CD8-positive, alpha-beta T cell (primary cell): ENCODE measurements at regions of chr10 and their contacts with region 1.

Region 1: DNA sequence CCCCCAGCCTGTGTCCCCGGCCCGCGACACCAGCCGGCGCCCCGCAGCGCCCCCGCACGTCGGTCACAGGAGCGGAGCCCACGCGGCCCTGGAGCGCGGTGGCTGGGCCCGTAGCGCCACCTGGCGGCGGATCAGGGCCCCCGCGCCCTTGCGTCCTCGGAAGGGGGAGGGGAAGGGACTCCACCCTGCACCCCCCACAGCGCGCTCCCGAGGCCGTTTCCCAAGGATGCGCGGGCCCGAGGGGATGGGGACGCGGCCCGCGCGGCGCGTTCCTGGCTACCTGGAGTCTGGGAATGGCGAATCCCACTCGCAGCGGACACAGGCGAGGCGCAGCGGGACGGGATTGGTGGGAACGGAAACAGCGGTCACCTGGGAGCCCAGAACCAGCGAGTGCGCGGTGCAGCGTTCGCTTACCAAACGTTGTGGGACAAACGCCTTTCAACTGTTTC is 23.8 kb upstream of the MKI67 start:
- DNase-seq: peak; percentile 54 to 91 (median 80)
- ATAC-seq: peak; percentile 98
- H3K4me3 ChIP-seq: peak overlapping the region; percentile 66 to 83
- H3K4me3 Mint-ChIP-seq: peak overlapping the region; percentile 73
- H3K27ac ChIP-seq: no peak overlapping the region
- H3K27ac Mint-ChIP-seq: no peak overlapping the region
- H3K4me1 ChIP-seq: peaks cover 4% of the 10 kb centered on the region
- H3K4me1 Mint-ChIP-seq: peaks cover 2% of the 10 kb centered on the region
- H3K27me3 ChIP-seq: no peaks in the 10 kb centered on the region
- H3K27me3 Mint-ChIP-seq: no peaks in the 10 kb centered on the region
- CTCF ChIP-seq: peak; percentile 91

Region 2: GRCh38 chr10:127715782-127716378 is 434.2 kb before region 1 on chr10:
- CTCF ChIA-PET with region 1: no interaction called
- POLR2A ChIA-PET with region 1: no interaction called
- intact Hi-C with region 1: loop called (anchors 5 to 10 kb)
- DNase-seq: peak in 2 of 9 experiments; percentile 13 to 24
- ATAC-seq: no peak
- H3K4me3 ChIP-seq: no peak overlapping the region
- H3K4me3 Mint-ChIP-seq: no peak overlapping the region
- H3K27ac ChIP-seq: no peak overlapping the region
- H3K27ac Mint-ChIP-seq: no peak overlapping the region
- H3K4me1 ChIP-seq: no peaks in the 10 kb centered on the region
- H3K4me1 Mint-ChIP-seq: no peaks in the 10 kb centered on the region
- H3K27me3 ChIP-seq: no peaks in the 10 kb centered on the region
- H3K27me3 Mint-ChIP-seq: peaks cover 2% of the 10 kb centered on the region
- CTCF ChIP-seq: no peak

Region 3: DNA sequence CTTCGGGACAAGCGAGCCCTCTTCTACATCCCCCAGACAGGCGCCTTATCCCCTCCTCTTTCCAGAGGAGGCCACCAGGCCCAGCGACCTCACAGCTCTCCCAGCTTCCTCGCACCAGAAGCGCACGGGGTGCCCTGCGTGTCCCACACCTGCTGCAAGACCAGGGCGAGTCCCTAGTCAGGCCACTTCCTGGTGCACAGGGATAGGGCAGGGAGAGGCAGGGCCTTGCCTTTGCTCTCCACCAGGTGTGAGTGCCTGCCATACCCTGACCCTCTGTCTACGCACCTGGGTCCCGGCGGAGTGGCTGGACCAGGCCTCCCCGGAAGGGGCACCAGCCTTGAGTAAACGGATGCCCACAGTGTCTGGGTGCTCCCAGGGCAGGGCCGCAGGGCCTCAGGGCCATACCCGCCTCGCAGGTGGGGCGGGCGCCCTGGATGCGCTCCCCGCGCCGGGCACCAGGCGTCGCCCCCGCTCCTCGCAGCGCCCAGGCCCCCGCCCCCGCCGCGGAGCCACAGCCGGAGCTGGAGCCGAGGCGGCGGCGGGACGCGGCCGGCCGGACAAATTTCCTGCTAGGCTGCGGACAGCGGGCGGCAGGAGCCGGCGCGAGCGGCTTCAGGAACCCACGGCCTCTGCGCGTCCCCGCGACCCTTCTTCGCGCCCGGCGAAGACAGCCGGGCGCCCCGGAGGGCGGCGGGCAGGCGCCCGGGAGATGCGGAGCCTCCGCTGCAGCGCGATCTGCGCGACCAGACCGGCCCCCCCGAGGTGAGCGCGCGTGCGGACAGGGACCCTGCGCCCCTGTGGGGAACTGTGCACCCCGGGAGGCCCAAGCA is 243.3 kb before region 1 on chr10 and contains the start of gene PTPRE:
- CTCF ChIA-PET with region 1: no interaction called
- POLR2A ChIA-PET with region 1: no interaction called
- intact Hi-C with region 1: loop called in 1 of 2 experiments (anchors 1 kb)
- DNase-seq: peak; percentile 17 to 79 (median 49)
- ATAC-seq: peak; percentile 96
- H3K4me3 ChIP-seq: peak within 1 kb of the TSS in 1 of 2 experiments; percentile 41
- H3K4me3 Mint-ChIP-seq: peak within 1 kb of the TSS; percentile 58
- H3K27ac ChIP-seq: no peak within 1 kb of the TSS
- H3K27ac Mint-ChIP-seq: no peak within 1 kb of the TSS
- H3K4me1 ChIP-seq: no peaks in the 10 kb centered on the region
- H3K4me1 Mint-ChIP-seq: no peaks in the 10 kb centered on the region
- H3K27me3 ChIP-seq: no peaks in the 10 kb centered on the region
- H3K27me3 Mint-ChIP-seq: peaks cover 32% of the 10 kb centered on the region
- CTCF ChIP-seq: peak; percentile 54
- total RNA-seq, gene PTPRE: 72.0 to 80.4 TPM

Region 4: GRCh38 chr10:128035557-128035973 is 114.5 kb before region 1 on chr10:
- CTCF ChIA-PET with region 1: interaction called, 32 read pairs
- POLR2A ChIA-PET with region 1: no interaction called
- intact Hi-C with region 1: loop called (anchors 1 kb)
- DNase-seq: peak; percentile 40 to 78 (median 70)
- ATAC-seq: peak; percentile 78
- H3K4me3 ChIP-seq: no peak overlapping the region
- H3K4me3 Mint-ChIP-seq: no peak overlapping the region
- H3K27ac ChIP-seq: no peak overlapping the region
- H3K27ac Mint-ChIP-seq: no peak overlapping the region
- H3K4me1 ChIP-seq: no peaks in the 10 kb centered on the region
- H3K4me1 Mint-ChIP-seq: no peaks in the 10 kb centered on the region
- H3K27me3 ChIP-seq: no peaks in the 10 kb centered on the region
- H3K27me3 Mint-ChIP-seq: no peaks in the 10 kb centered on the region
- CTCF ChIP-seq: peak; percentile 73

Region 5: GRCh38 chr10:128078136-128078969 is 71.7 kb before region 1 on chr10:
- CTCF ChIA-PET with region 1: interaction called, 55 read pairs
- POLR2A ChIA-PET with region 1: no interaction called
- intact Hi-C with region 1: loop called (anchors 1 kb)
- DNase-seq: peak in 5 of 9 experiments; percentile 29 to 72 (median 51)
- ATAC-seq: peak; percentile 78
- H3K4me3 ChIP-seq: no peak overlapping the region
- H3K4me3 Mint-ChIP-seq: no peak overlapping the region
- H3K27ac ChIP-seq: no peak overlapping the region
- H3K27ac Mint-ChIP-seq: no peak overlapping the region
- H3K4me1 ChIP-seq: no peaks in the 10 kb centered on the region
- H3K4me1 Mint-ChIP-seq: peaks cover 6% of the 10 kb centered on the region
- H3K27me3 ChIP-seq: no peaks in the 10 kb centered on the region
- H3K27me3 Mint-ChIP-seq: no peaks in the 10 kb centered on the region
- CTCF ChIP-seq: peak; percentile 44

Region 6: GRCh38 chr10:128125944-128126764 is 23.9 kb before region 1 on chr10 and contains the start of gene MKI67:
- CTCF ChIA-PET with region 1: interaction called, 10 read pairs
- POLR2A ChIA-PET with region 1: no interaction called
- intact Hi-C with region 1: loop called in 1 of 2 experiments (anchors 1 kb)
- DNase-seq: peak; percentile 74 to 95 (median 89)
- ATAC-seq: peak; percentile 94
- H3K4me3 ChIP-seq: peak within 1 kb of the TSS; percentile 75 to 84
- H3K4me3 Mint-ChIP-seq: peak within 1 kb of the TSS; percentile 87
- H3K27ac ChIP-seq: peak within 1 kb of the TSS; percentile 29 to 36
- H3K27ac Mint-ChIP-seq: no peak within 1 kb of the TSS
- H3K4me1 ChIP-seq: peaks cover 17% of the 10 kb centered on the region
- H3K4me1 Mint-ChIP-seq: peaks cover 26% of the 10 kb centered on the region
- H3K27me3 ChIP-seq: peaks cover 11 to 14% of the 10 kb centered on the region in 2 experiments
- H3K27me3 Mint-ChIP-seq: peaks cover 30% of the 10 kb centered on the region
- CTCF ChIP-seq: no peak
- total RNA-seq, gene MKI67: 1.5 to 1.9 TPM

Region 7: DNA sequence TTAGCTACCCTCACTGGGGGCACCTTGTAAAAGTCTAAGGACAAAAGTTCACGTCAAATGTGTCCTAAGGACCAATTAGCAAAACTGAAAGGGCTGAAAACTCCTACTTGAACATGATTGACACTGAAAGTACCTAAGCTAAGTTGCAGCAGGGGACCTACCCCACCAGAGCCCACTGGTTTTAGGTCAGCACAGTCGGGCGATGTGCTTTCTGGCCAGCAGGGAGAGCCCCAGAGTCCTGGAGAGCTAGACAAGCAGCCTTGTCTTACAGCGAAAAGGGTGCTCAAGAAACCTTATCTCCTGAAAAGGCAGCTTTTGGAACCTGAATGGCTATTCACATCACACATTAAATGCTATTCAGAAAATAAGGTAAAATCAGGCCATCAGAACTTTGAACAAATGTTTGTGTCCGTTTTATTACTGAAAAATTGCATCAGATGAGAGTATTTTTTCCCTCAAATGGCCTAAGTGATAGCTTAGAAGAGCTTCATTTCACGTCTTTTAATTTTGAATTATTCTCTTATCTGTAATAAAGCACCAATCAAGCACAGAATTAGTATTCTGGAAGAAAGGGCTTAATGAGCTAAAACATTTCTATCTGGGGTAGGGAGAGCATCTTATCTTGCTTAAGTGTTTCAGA is 28.4 kb after region 1 on chr10:
- CTCF ChIA-PET with region 1: interaction called, 6 read pairs
- POLR2A ChIA-PET with region 1: no interaction called
- intact Hi-C with region 1: loop called in 1 of 2 experiments (anchors 1 kb)
- DNase-seq: peak in 8 of 9 experiments; percentile 24 to 66 (median 48)
- ATAC-seq: peak; percentile 54
- H3K4me3 ChIP-seq: no peak overlapping the region
- H3K4me3 Mint-ChIP-seq: no peak overlapping the region
- H3K27ac ChIP-seq: no peak overlapping the region
- H3K27ac Mint-ChIP-seq: no peak overlapping the region
- H3K4me1 ChIP-seq: peaks cover 13% of the 10 kb centered on the region
- H3K4me1 Mint-ChIP-seq: peaks cover 23% of the 10 kb centered on the region
- H3K27me3 ChIP-seq: no peaks in the 10 kb centered on the region
- H3K27me3 Mint-ChIP-seq: no peaks in the 10 kb centered on the region
- CTCF ChIP-seq: peak; percentile 44